ENCODE measurements at regions of chr5 and their contacts with region 1.

Region 1: DNA sequence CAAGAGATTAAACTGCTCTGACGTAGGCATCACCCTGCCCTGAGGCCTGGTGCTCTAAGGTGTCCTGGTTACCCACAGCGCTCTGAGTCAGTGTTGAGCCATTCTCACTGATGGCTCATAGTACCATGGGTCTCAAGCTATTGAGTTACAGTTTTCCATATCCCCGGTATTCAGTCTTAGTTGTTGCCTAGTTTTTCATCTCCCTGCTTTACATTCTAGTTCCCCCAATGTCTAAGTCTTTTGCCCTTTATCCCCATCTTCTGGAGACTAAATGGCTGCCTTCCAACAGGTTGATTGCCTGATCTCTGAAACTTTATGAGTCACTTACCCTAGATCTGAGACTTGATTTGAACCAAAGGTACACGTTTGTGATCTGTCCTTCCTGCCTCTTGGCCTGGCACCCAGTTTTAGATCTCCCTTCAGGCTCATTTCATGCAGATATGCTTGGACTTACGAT is 161.2 kb upstream of the PTGER4 start:
- DNase-seq: peak; percentile 98
- H3K4me3 ChIP-seq: no peak overlapping the region
- H3K27ac ChIP-seq: peak overlapping the region; percentile 75
- H3K4me1 ChIP-seq: peaks cover 20% of the 10 kb centered on the region
- H3K27me3 ChIP-seq: no peaks in the 10 kb centered on the region
- CTCF ChIP-seq: no peak

Region 2: GRCh38 chr5:40165794-40166728 is 352.5 kb before region 1 on chr5:
- CTCF ChIA-PET with region 1: no interaction called
- dilution Hi-C with region 1: no loop called
- in situ Hi-C with region 1: no loop called
- intact Hi-C with region 1: loop called (anchors 5 kb)
- DNase-seq: peak; percentile 10
- H3K4me3 ChIP-seq: no peak overlapping the region
- H3K27ac ChIP-seq: no peak overlapping the region
- H3K4me1 ChIP-seq: no peaks in the 10 kb centered on the region
- H3K27me3 ChIP-seq: no peaks in the 10 kb centered on the region
- CTCF ChIP-seq: peak; percentile 10 to 46

Region 3: GRCh38 chr5:40551496-40552491 is 33.3 kb after region 1 on chr5:
- CTCF ChIA-PET with region 1: no interaction called
- dilution Hi-C with region 1: no loop called
- in situ Hi-C with region 1: no loop called
- intact Hi-C with region 1: loop called (anchors 5 kb)
- DNase-seq: peak; percentile 85
- H3K4me3 ChIP-seq: no peak overlapping the region
- H3K27ac ChIP-seq: peak overlapping the region; percentile 96
- H3K4me1 ChIP-seq: peaks cover 15% of the 10 kb centered on the region
- H3K27me3 ChIP-seq: no peaks in the 10 kb centered on the region
- CTCF ChIP-seq: no peak

Measured in mammary epithelial cell (primary cell).